A549 (cell line): ENCODE measurements at regions of chr2 and their contacts with region 1.

Region 1: GRCh38 chr2:236769921-236770671 is 200.5 kb downstream of the ACKR3 start:
- DNase-seq: peak; percentile 69 to 87
- ATAC-seq: peak; percentile 93 to 94
- H3K4me3 ChIP-seq: no peak overlapping the region
- H3K27ac ChIP-seq: peak overlapping the region; percentile 73 to 82
- H3K4me1 ChIP-seq: peaks cover 21% of the 10 kb centered on the region
- CTCF ChIP-seq: no peak
- EP300 ChIP-seq: peak; percentile 44 to 78; a peak in 3 of 5 replicates
- POLR2A ChIP-seq: no peak
- RAD21 ChIP-seq: peak in 1 of 2 experiments; percentile 32; a peak in 3 of 5 replicates

Region 2: DNA sequence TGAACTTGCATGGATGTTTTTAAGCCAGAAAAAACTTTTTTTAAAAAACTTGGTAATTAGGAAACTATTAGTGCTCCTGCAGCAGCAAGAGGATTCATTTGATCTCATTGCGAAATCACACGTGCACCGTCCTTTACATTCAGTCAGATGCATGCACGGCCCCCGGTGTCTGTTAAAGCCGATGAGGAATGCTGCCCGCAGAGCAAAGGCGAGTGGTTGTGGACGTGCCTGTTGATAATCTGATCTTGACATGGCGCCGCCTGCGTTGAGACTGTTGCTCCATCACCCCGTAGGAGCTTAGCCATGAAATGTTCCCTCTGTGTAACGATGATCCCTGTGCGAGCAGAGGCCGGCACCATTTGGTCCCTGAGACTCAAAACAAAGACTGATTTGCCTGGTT is 901.9 kb before region 1 on chr2:
- CTCF ChIA-PET with region 1: no interaction called
- POLR2A ChIA-PET with region 1: no interaction called
- DNase-seq: no peak
- ATAC-seq: no peak
- H3K4me3 ChIP-seq: no peak overlapping the region
- H3K27ac ChIP-seq: no peak overlapping the region
- H3K4me1 ChIP-seq: no peaks in the 10 kb centered on the region
- CTCF ChIP-seq: no peak
- EP300 ChIP-seq: no peak
- POLR2A ChIP-seq: no peak
- RAD21 ChIP-seq: no peak

Region 3: GRCh38 chr2:236642584-236643291 is 127.4 kb before region 1 on chr2:
- CTCF ChIA-PET with region 1: interaction called, 4 read pairs
- POLR2A ChIA-PET with region 1: interaction called, 12 read pairs
- DNase-seq: peak; percentile 26 to 71
- ATAC-seq: peak; percentile 90 to 96
- H3K4me3 ChIP-seq: no peak overlapping the region
- H3K27ac ChIP-seq: peak overlapping the region; percentile 72 to 85
- H3K4me1 ChIP-seq: peaks cover 12% of the 10 kb centered on the region; the same call in 1 of the 3 replicates
- CTCF ChIP-seq: no peak
- EP300 ChIP-seq: peak; percentile 66 to 85; a peak in 4 of 5 replicates
- POLR2A ChIP-seq: no peak
- RAD21 ChIP-seq: peak in 1 of 2 experiments; percentile 26; a peak in 1 of 5 replicates

Region 4: DNA sequence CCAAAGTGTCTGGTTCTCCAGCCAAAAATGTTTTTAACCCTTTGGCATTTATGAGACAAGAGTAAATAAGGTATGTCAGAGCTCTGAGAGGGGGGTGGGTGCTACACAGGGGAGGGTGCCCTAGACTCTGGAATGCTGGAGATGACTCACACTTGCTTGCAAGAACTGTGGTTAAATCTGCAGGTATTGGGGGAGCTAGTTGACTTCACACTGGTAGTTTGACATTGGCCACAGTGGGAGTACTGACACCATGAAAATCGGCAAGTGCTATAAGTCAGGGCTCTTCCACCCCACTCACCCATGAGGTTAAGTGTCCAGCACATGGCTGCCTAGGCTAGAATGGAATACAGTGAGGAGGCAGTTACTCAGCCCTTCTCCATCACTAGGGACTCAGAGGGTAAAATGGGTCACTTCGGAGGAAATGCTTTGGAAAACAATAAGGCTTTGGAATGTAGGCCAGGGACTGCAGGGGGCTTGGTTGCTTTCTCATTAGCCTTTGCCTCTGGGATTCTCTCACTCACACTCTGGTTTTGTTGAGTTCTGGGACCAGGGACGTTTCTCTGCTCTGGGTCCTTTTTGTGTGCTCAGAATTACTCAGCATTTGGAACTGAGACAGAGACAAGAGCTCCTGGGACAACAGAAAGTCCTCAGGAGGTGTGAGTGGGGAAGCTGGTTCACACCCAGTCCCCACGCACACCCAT is 108.9 kb before region 1 on chr2:
- CTCF ChIA-PET with region 1: interaction called, 3 read pairs
- POLR2A ChIA-PET with region 1: interaction called, 13 read pairs
- DNase-seq: peak; percentile 28 to 77
- ATAC-seq: peak; percentile 77 to 78; a peak in 5 of 6 replicates
- H3K4me3 ChIP-seq: no peak overlapping the region
- H3K27ac ChIP-seq: peak overlapping the region; percentile 88 to 90
- H3K4me1 ChIP-seq: peaks cover 48% of the 10 kb centered on the region
- CTCF ChIP-seq: no peak
- EP300 ChIP-seq: peak; percentile 64 to 78; a peak in 3 of 5 replicates
- POLR2A ChIP-seq: no peak
- RAD21 ChIP-seq: peak in 1 of 2 experiments; percentile 57; a peak in 3 of 5 replicates

Region 5: GRCh38 chr2:236745420-236746197 is 24.5 kb before region 1 on chr2:
- CTCF ChIA-PET with region 1: interaction called, 5 read pairs
- POLR2A ChIA-PET with region 1: interaction called, 17 read pairs
- DNase-seq: peak; percentile 71 to 79
- ATAC-seq: peak; percentile 97
- H3K4me3 ChIP-seq: no peak overlapping the region
- H3K27ac ChIP-seq: peak overlapping the region; percentile 73 to 79
- H3K4me1 ChIP-seq: peaks cover 41% of the 10 kb centered on the region
- CTCF ChIP-seq: no peak
- EP300 ChIP-seq: peak; percentile 61 to 69; a peak in 2 of 5 replicates
- POLR2A ChIP-seq: no peak
- RAD21 ChIP-seq: peak; percentile 18 to 56; a peak in 3 of 5 replicates

Region 6: DNA sequence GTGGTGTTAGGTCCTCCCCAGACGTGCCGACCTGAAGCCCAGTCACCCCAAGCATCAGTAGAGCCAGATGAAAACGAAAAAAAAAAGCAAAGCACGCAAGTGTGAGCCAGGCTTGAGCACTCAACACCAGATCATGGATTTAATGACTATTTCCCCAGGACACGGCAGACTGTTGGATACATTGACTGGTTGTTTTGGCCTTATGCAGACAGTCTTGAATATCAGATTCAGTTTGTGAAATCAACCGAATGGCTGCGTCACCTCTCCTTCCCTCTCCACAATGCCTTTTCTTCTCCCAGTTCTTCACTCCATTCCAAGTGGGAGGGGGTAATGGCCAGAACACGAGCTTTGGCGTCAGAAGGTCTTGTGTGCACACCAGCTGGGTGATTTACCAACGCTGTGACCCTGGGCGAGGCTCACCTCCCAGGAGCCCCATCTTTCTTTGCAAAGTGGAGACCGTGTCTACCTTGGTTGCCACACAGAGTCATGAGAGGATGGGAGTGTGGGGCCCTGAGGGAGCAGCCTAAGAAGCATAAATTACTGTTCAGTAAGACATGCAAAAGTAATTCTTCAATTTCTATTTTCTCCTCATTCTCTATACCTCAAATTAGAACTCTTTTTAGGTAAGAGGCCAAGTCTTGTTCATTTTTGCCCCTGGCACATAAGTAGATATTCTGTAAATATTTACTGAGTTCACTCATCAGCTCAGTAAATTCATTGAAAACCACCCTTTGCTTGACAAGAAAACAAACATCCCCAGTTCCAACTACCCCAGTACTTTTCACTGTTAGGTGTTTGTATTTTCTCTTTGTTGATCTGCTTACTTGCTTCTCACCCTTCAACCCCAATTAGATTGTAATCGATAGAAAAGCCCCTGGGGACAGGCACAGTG is 134.5 kb after region 1 on chr2:
- CTCF ChIA-PET with region 1: no interaction called
- POLR2A ChIA-PET with region 1: no interaction called
- DNase-seq: no peak
- ATAC-seq: no peak
- H3K4me3 ChIP-seq: no peak overlapping the region
- H3K27ac ChIP-seq: no peak overlapping the region
- H3K4me1 ChIP-seq: no peaks in the 10 kb centered on the region
- CTCF ChIP-seq: no peak
- EP300 ChIP-seq: no peak
- POLR2A ChIP-seq: no peak
- RAD21 ChIP-seq: no peak